Pancreas (tissue), 10 donors: ENCODE measurements at regions of chr22 and their contacts with region 1.

Region 1: GRCh38 chr22:20429254-20430100 is 8.1 kb downstream of the SCARF2 start:
- DNase-seq: peak; percentile 51 to 84 (median 65)
- ATAC-seq: peak; percentile 19 to 84 (median 68)
- H3K4me3 ChIP-seq: peak overlapping the region in 2 of 4 donors; percentile 16 to 40
- H3K27ac ChIP-seq: no peak overlapping the region
- H3K4me1 ChIP-seq: peaks cover 4 to 16% (median 5%) of the 10 kb centered on the region in 3 donors
- H3K27me3 ChIP-seq: peaks cover 0 to 37% (median 0%) of the 10 kb centered on the region in 4 donors
- CTCF ChIP-seq: no peak

Region 2: DNA sequence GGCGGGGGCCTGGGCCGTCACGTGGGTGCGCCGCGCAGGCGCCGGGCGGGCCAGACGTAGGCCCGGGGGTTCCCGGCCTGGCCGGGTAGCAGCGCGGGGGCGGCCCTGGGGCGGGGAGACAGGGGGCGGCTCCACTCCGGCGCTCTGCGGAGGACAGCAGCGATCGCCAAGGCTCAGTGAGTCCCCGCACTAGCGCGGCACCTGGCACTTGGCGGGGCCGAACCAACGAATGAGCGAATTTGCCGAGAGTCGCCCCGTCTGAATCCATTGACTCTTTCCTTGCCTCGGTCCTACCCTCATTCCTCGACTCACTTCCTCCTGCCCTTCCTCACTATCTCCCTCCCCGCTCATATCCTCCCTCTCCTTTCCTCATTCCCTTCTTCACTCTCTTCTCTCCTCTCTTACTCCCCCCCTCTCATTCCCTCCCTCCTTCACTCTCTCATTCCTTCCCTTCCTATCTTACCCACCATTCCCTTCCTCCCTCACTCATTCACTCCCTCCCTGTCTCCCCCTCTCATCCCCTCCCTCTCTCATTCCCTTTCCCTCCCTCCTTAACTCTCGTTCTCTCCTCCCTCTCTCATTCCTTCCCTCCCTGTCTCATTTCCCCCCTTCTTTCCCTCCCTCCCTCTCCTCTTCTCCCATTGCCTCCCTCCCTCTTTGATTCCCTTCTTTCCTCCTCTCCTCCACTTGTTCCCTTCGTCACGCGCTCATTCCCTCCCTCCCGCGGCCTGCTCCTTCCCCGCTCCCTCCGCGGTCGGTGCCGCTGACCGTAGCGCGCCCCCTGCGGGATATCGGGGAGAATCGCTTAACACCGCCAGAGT is 66.6 kb after region 1 on chr22:
- intact Hi-C with region 1: loop called in 1 of 3 experiments (anchors 10 kb)
- DNase-seq: peak; percentile 91 to 97 (median 93)
- ATAC-seq: peak; percentile 93 to 98 (median 95)
- H3K4me3 ChIP-seq: peak overlapping the region; percentile 55 to 80 (median 74)
- H3K27ac ChIP-seq: peak overlapping the region; percentile 67 to 91 (median 80)
- H3K4me1 ChIP-seq: peaks cover 0 to 6% (median 5%) of the 10 kb centered on the region in 3 donors
- H3K27me3 ChIP-seq: no peaks in the 10 kb centered on the region
- CTCF ChIP-seq: peak; percentile 75 to 81 (median 76)